ENCODE measurements at regions of chr10 and their contacts with region 1.

Region 1: DNA sequence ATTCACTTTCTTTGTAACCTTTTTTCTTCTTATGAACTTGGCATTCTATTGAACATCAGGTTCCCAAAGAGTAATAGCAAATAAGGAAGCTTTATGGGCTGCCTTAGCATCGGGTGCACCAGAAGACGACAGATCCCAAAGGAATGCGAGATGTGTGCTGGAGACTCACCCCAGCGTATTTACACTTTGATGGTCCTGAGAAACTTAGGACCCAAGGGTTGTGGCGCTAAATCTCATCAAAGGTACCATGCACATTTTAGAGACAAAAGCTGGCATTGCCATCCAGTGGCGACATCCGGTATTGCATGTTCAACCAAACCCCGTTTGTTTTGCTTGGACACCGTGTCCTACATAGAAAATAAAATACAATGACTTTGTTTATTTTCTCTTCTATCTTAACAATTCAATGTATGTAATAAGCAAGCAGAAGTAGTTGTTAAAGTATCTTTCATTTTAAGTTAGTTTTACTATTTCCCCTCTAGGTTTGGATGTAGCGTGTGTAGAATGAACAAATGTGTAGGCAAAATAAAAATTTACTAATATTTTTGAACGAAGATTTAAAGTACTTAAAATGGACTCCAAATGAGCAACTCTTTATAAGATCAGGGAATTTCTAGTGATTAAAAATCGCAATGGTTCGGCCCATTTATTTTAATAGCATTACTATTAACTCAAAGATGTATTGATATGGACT is 1154.8 kb downstream of the GATA3 start:
- DNase-seq: peak; percentile 16
- ATAC-seq: peak; percentile 78
- H3K4me3 ChIP-seq: no peak overlapping the region
- H3K27ac ChIP-seq: no peak overlapping the region
- H3K4me1 ChIP-seq: no peaks in the 10 kb centered on the region
- H3K27me3 ChIP-seq: no peaks in the 10 kb centered on the region
- CTCF ChIP-seq: peak; percentile 82 to 87 (median 86)
- EP300 ChIP-seq: no peak
- POLR2A ChIP-seq: no peak
- RAD21 ChIP-seq: peak; percentile 87

Region 2: DNA sequence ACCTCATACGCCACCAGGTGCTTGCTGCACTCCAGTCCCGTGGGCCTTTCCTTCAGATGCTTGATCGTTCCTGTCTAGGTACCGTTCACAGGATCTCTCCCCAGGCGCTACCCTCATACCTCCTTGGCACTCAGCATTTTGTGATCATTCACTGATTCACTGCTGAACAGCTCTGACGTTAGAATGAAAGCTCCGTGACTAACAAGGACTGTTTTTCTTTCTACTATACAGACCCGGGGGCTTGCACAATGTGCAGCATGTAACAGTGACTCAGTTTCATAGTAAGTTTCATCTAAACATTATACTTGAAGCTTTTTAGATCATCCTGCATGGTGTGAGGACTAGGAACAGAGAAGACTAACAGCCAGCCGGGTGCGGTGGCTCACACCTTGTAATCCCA is 1442.0 kb before region 1 on chr10:
- CTCF ChIA-PET with region 1: no interaction called
- POLR2A ChIA-PET with region 1: no interaction called
- RAD21 ChIA-PET with region 1: no interaction called
- SMC1A ChIA-PET with region 1: no interaction called
- in situ Hi-C with region 1: no loop called
- intact Hi-C with region 1: loop called (anchors 10 kb)
- DNase-seq: no peak
- ATAC-seq: no peak
- H3K4me3 ChIP-seq: no peak overlapping the region
- H3K27ac ChIP-seq: no peak overlapping the region
- H3K4me1 ChIP-seq: no peaks in the 10 kb centered on the region
- H3K27me3 ChIP-seq: no peaks in the 10 kb centered on the region
- CTCF ChIP-seq: no peak
- EP300 ChIP-seq: no peak
- POLR2A ChIP-seq: no peak
- RAD21 ChIP-seq: no peak

Region 3: GRCh38 chr10:7872041-7872442 is 1337.2 kb before region 1 on chr10:
- CTCF ChIA-PET with region 1: interaction called, 26 read pairs
- POLR2A ChIA-PET with region 1: no interaction called
- RAD21 ChIA-PET with region 1: interaction called, 9 read pairs
- SMC1A ChIA-PET with region 1: interaction called, 7 read pairs
- in situ Hi-C with region 1: loop called (anchors 5 kb)
- intact Hi-C with region 1: loop called (anchors 1 kb)
- DNase-seq: no peak
- ATAC-seq: no peak
- H3K4me3 ChIP-seq: peak overlapping the region; percentile 47; the same call in 1 of the 2 replicates
- H3K27ac ChIP-seq: no peak overlapping the region
- H3K4me1 ChIP-seq: no peaks in the 10 kb centered on the region
- H3K27me3 ChIP-seq: no peaks in the 10 kb centered on the region
- CTCF ChIP-seq: peak; percentile 58 to 65 (median 62)
- EP300 ChIP-seq: no peak
- POLR2A ChIP-seq: no peak
- RAD21 ChIP-seq: peak; percentile 94

Region 4: DNA sequence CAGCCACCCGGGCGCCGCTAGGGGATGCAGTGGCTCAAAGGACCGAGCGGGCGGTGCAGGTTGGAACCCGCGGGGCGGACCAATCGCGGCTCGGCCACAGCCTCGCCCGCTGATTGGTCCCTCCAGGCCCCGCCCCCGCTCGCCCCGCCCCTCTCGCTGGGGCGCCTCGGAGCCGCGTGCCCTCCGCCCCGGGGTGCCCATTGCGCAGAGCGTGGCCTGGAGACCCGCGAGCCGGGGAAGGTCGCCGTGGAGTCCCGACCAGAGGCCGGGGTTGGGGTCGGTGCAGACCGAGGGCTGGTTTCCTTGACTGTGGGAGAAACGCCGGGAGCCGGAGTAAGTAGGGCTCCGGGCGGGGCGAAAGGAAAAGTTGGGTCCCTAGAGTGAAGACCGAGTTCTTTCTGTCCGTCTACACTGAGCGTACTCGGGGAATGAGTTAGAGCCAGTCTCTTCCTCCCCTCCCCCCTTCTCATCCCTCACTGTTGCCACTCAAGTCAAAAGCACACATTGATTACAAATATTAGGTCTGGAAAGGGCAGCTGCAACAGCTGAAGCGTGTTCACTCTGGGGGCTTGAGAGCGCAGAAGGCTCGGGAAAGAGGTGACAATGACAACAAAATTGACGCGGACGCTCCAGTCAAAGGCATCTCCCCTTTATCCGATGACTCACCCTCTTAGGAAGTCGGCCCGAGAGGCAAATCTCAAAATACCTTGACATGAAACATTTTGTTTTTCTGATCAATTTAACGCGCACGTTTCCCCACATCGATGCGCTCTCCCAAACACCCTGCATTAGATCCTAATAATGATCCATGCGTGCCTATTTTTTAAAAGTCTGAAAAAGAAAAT is 1155.6 kb before region 1 on chr10:
- CTCF ChIA-PET with region 1: interaction called, 3 read pairs
- POLR2A ChIA-PET with region 1: no interaction called
- RAD21 ChIA-PET with region 1: interaction called, 3 read pairs
- SMC1A ChIA-PET with region 1: no interaction called
- in situ Hi-C with region 1: loop called (anchors 25 kb)
- intact Hi-C with region 1: loop called (anchors 10 kb)
- DNase-seq: no peak
- ATAC-seq: peak; percentile 84
- H3K4me3 ChIP-seq: peak overlapping the region; percentile 54
- H3K27ac ChIP-seq: no peak overlapping the region
- H3K4me1 ChIP-seq: peaks cover 10% of the 10 kb centered on the region; the same call in 1 of the 2 replicates
- H3K27me3 ChIP-seq: peaks cover 10 to 11% of the 10 kb centered on the region in 2 experiments
- CTCF ChIP-seq: peak; percentile 84 to 98 (median 96); a peak in 5 of 6 replicates
- EP300 ChIP-seq: no peak
- POLR2A ChIP-seq: peak; percentile 33; the same call in 1 of the 2 replicates
- RAD21 ChIP-seq: 0 out of 2 replicates have a peak, but pooled peaks have one; percentile 77

Region 5: GRCh38 chr10:8967061-8967460 is 242.2 kb before region 1 on chr10:
- CTCF ChIA-PET with region 1: no interaction called
- POLR2A ChIA-PET with region 1: no interaction called
- RAD21 ChIA-PET with region 1: no interaction called
- SMC1A ChIA-PET with region 1: no interaction called
- in situ Hi-C with region 1: no loop called
- intact Hi-C with region 1: no loop called
- DNase-seq: no peak
- ATAC-seq: no peak
- H3K4me3 ChIP-seq: no peak overlapping the region
- H3K27ac ChIP-seq: no peak overlapping the region
- H3K4me1 ChIP-seq: no peaks in the 10 kb centered on the region
- H3K27me3 ChIP-seq: no peaks in the 10 kb centered on the region
- CTCF ChIP-seq: no peak
- EP300 ChIP-seq: no peak
- POLR2A ChIP-seq: no peak
- RAD21 ChIP-seq: no peak

Region 6: DNA sequence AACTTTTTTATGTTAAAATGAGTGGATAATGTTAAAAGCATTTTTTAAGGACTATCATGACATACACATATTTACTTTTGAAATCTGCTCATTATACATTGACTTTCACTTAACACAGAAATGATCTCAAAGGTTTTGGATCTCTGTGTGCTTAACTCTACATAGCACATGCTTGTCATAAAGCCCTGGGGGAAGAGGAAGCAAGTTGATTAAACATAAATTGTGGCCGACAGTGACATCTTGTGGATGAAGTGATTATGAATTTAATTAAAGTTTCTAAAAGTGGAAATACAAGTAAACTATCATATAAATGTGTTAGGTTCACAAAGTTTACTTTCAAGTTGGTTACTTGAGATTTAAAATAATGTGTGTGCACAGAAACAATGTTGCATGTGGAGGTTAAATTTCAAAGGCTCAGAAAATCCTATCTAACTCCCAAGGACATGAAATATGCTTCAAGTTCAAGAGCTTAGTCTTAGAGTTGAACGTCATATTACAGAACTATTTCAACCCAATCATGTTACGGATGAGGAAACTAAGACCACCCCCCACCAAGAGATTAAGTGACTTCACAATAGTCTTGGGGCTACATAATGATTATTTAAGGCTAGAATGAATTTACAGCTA is 93.0 kb after region 1 on chr10:
- CTCF ChIA-PET with region 1: interaction called, 3 read pairs
- POLR2A ChIA-PET with region 1: no interaction called
- RAD21 ChIA-PET with region 1: no interaction called
- SMC1A ChIA-PET with region 1: no interaction called
- in situ Hi-C with region 1: no loop called
- intact Hi-C with region 1: loop called (anchors 5 kb)
- DNase-seq: no peak
- ATAC-seq: peak; percentile 64
- H3K4me3 ChIP-seq: no peak overlapping the region
- H3K27ac ChIP-seq: no peak overlapping the region
- H3K4me1 ChIP-seq: no peaks in the 10 kb centered on the region
- H3K27me3 ChIP-seq: no peaks in the 10 kb centered on the region
- CTCF ChIP-seq: peak; percentile 15 to 44 (median 22); a peak in 2 of 6 replicates
- EP300 ChIP-seq: no peak
- POLR2A ChIP-seq: no peak
- RAD21 ChIP-seq: peak; percentile 54

Measured in GM12878 (cell line).